ENCODE measurements at regions of chr1 and their contacts with region 1.

Region 1: GRCh38 chr1:230807029-230807428 is 59.8 kb downstream of the CAPN9 start:
- DNase-seq: peak; percentile 82 to 91
- ATAC-seq: peak; percentile 93 to 95
- H3K4me3 ChIP-seq: no peak overlapping the region
- H3K27ac ChIP-seq: peak overlapping the region; percentile 75 to 84 (median 80)
- H3K4me1 ChIP-seq: peaks cover 26 to 41% of the 10 kb centered on the region in 2 donors
- H3K27me3 ChIP-seq: no peaks in the 10 kb centered on the region
- CTCF ChIP-seq: no peak
- POLR2A ChIP-seq: peak in 1 of 2 donors; percentile 14

Region 2: GRCh38 chr1:230825063-230825721 is 18.2 kb after region 1 on chr1:
- in situ Hi-C with region 1: no loop called
- intact Hi-C with region 1: loop called (anchors 1 kb)
- DNase-seq: peak; percentile 51 to 75
- ATAC-seq: peak; percentile 86 to 88
- H3K4me3 ChIP-seq: peak overlapping the region in 2 of 4 donors; percentile 1 to 36
- H3K27ac ChIP-seq: peak overlapping the region; percentile 91 to 94 (median 93)
- H3K4me1 ChIP-seq: peaks cover 60 to 66% of the 10 kb centered on the region in 2 donors
- H3K27me3 ChIP-seq: no peaks in the 10 kb centered on the region
- CTCF ChIP-seq: no peak
- POLR2A ChIP-seq: peak in 1 of 2 donors; percentile 20

Region 3: GRCh38 chr1:230917284-230918135 is 110.5 kb after region 1 on chr1:
- in situ Hi-C with region 1: loop called in 2 of 4 experiments (anchors 5 to 10 kb)
- intact Hi-C with region 1: no loop called
- DNase-seq: peak; percentile 19 to 48
- ATAC-seq: peak; percentile 70 to 81
- H3K4me3 ChIP-seq: no peak overlapping the region
- H3K27ac ChIP-seq: no peak overlapping the region
- H3K4me1 ChIP-seq: no peaks in the 10 kb centered on the region
- H3K27me3 ChIP-seq: no peaks in the 10 kb centered on the region
- CTCF ChIP-seq: peak; percentile 42 to 63 (median 51)
- POLR2A ChIP-seq: no peak